ENCODE measurements at regions of chr5 and their contacts with region 1.

Region 1: DNA sequence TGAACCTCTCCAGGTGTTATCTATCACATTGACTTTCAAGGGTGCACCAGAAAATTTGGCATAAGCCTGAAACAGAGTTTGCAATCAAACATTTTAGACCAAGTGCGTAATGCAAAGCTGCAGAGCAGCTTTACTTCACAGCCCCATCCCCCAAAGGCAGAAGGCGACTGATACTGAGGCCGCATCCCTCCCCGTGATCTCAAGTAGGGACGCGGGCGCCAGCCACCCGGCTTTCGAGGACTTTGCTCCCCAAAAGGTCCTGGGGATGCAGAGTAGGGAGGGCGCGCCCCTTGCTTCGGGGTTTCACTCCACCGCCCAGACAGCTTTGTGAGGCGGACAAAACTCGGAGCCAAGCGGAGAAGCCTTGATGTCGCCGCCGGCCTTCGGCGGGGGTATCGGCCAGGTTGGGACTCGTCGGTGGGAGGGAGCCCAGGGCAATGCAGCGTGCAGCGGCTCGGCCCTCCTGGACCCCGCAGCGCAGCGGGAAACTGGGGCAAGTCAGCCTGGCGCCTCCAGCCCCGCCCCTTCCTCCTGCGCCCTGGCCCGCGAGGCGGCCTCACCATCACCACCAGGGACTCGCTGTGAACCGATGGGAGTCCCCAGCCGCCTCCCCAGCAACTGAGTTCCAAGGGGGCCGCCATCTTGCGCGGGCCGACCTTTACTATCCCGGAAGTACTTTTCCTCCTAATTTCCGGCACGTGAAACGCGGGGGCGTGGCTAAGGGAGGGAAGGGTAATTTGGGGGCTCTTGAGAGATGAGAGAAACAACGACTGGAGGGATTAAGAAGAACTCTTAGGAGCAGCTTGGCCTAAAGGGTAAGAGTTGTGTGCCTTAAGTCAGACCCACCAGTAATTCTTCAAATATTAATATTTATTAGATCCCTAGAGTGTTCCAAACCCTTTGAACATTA is at the start of gene MTX3:
- DNase-seq: peak; percentile 93
- H3K4me3 Mint-ChIP-seq: peak within 1 kb of the TSS; percentile 84
- H3K27ac Mint-ChIP-seq: peak within 1 kb of the TSS; percentile 92
- H3K4me1 Mint-ChIP-seq: peaks cover 40% of the 10 kb centered on the region
- H3K27me3 Mint-ChIP-seq: no peaks in the 10 kb centered on the region
- total RNA-seq, gene MTX3: 5.7 to 6.1 TPM

Region 2: GRCh38 chr5:78405829-78406750 is 1584.8 kb before region 1 on chr5:
- CTCF ChIA-PET with region 1: no interaction called
- intact Hi-C with region 1: loop called (anchors 2 kb)
- DNase-seq: no peak
- H3K4me3 Mint-ChIP-seq: no peak overlapping the region
- H3K27ac Mint-ChIP-seq: peak overlapping the region; percentile 72
- H3K4me1 Mint-ChIP-seq: peaks cover 50% of the 10 kb centered on the region
- H3K27me3 Mint-ChIP-seq: no peaks in the 10 kb centered on the region

Region 3: GRCh38 chr5:79514391-79515105 is 476.3 kb before region 1 on chr5:
- CTCF ChIA-PET with region 1: no interaction called
- intact Hi-C with region 1: loop called (anchors 1 kb)
- DNase-seq: peak; percentile 91
- H3K4me3 Mint-ChIP-seq: peak overlapping the region; percentile 96
- H3K27ac Mint-ChIP-seq: peak overlapping the region; percentile 93
- H3K4me1 Mint-ChIP-seq: peaks cover 33% of the 10 kb centered on the region
- H3K27me3 Mint-ChIP-seq: peaks cover 19% of the 10 kb centered on the region

Region 4: GRCh38 chr5:79736528-79737514 is 254.0 kb before region 1 on chr5:
- CTCF ChIA-PET with region 1: no interaction called
- intact Hi-C with region 1: loop called (anchors 2 kb)
- DNase-seq: peak; percentile 28
- H3K4me3 Mint-ChIP-seq: peak overlapping the region; percentile 50
- H3K27ac Mint-ChIP-seq: peak overlapping the region; percentile 58
- H3K4me1 Mint-ChIP-seq: peaks cover 60% of the 10 kb centered on the region
- H3K27me3 Mint-ChIP-seq: peaks cover 31% of the 10 kb centered on the region

Region 5: GRCh38 chr5:79947567-79947966 is 43.3 kb before region 1 on chr5:
- CTCF ChIA-PET with region 1: no interaction called
- intact Hi-C with region 1: no loop called
- DNase-seq: no peak
- H3K4me3 Mint-ChIP-seq: no peak overlapping the region
- H3K27ac Mint-ChIP-seq: no peak overlapping the region
- H3K4me1 Mint-ChIP-seq: no peaks in the 10 kb centered on the region
- H3K27me3 Mint-ChIP-seq: no peaks in the 10 kb centered on the region

Region 6: GRCh38 chr5:80101993-80102392 is 111.1 kb after region 1 on chr5:
- CTCF ChIA-PET with region 1: no interaction called
- intact Hi-C with region 1: no loop called
- DNase-seq: no peak
- H3K4me3 Mint-ChIP-seq: no peak overlapping the region
- H3K27ac Mint-ChIP-seq: no peak overlapping the region
- H3K4me1 Mint-ChIP-seq: peaks cover 31% of the 10 kb centered on the region
- H3K27me3 Mint-ChIP-seq: no peaks in the 10 kb centered on the region

Region 7: GRCh38 chr5:80125962-80126480 is 135.2 kb after region 1 on chr5:
- CTCF ChIA-PET with region 1: no interaction called
- intact Hi-C with region 1: loop called (anchors 1 kb)
- DNase-seq: peak; percentile 44
- H3K4me3 Mint-ChIP-seq: no peak overlapping the region
- H3K27ac Mint-ChIP-seq: peak overlapping the region; percentile 43
- H3K4me1 Mint-ChIP-seq: peaks cover 47% of the 10 kb centered on the region
- H3K27me3 Mint-ChIP-seq: no peaks in the 10 kb centered on the region

Region 8: GRCh38 chr5:80654391-80655230 is 663.8 kb after region 1 on chr5 and contains the starts of genes DHFR and MSH3:
- CTCF ChIA-PET with region 1: no interaction called
- intact Hi-C with region 1: loop called (anchors 1 kb)
- DNase-seq: peak; percentile 95
- H3K4me3 Mint-ChIP-seq: peak within 1 kb of the TSS; percentile 95
- H3K27ac Mint-ChIP-seq: peak within 1 kb of the TSS; percentile 99
- H3K4me1 Mint-ChIP-seq: peaks cover 25% of the 10 kb centered on the region
- H3K27me3 Mint-ChIP-seq: no peaks in the 10 kb centered on the region
- total RNA-seq, gene DHFR: 107 to 112 TPM
- total RNA-seq, gene MSH3: 25.1 to 25.8 TPM

Measured in activated naive CD4-positive, alpha-beta T cell treated with anti-CD3 and anti-CD28 coated beads for 36 hours (primary cell).